Activated CD4-positive, alpha-beta T cell treated with anti-CD3 and anti-CD28 coated beads, Interleukin-2, amount 10 ng/mL, durations not matched to agents 7 days and 5 days (primary cell): ENCODE measurements at regions of chr5 and their contacts with region 1.

Region 1: DNA sequence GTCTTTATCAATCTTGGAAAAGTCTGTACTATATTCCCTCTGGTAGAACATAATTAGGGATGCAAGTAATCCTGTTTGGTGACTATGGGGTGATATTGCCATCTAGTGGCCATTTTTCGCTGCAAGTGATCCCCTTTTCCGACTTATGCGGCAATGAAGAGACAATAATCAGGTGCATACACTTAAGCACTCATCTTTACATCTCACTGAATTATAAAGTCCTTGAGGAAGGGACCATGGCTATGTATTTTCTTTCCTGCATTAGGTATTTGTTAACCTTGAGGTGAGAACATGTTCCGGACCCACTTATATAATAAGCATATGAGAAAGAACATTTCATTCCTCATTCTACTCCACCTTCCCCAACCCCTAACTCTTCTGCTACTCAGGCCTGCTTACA is 19.6 kb upstream of the LIX1 start:
- DNase-seq: peak; percentile 71
- H3K4me3 Mint-ChIP-seq: no peak overlapping the region
- H3K27ac Mint-ChIP-seq: no peak overlapping the region
- H3K4me1 Mint-ChIP-seq: peaks cover 15% of the 10 kb centered on the region
- H3K27me3 Mint-ChIP-seq: peaks cover under 1% of the 10 kb centered on the region

Region 2: GRCh38 chr5:96984506-96985192 is 177.4 kb before region 1 on chr5:
- CTCF ChIA-PET with region 1: no interaction called
- POLR2A ChIA-PET with region 1: no interaction called
- DNase-seq: no peak
- H3K4me3 Mint-ChIP-seq: no peak overlapping the region
- H3K27ac Mint-ChIP-seq: peak overlapping the region; percentile 16
- H3K4me1 Mint-ChIP-seq: peaks cover 25% of the 10 kb centered on the region
- H3K27me3 Mint-ChIP-seq: no peaks in the 10 kb centered on the region

Region 3: DNA sequence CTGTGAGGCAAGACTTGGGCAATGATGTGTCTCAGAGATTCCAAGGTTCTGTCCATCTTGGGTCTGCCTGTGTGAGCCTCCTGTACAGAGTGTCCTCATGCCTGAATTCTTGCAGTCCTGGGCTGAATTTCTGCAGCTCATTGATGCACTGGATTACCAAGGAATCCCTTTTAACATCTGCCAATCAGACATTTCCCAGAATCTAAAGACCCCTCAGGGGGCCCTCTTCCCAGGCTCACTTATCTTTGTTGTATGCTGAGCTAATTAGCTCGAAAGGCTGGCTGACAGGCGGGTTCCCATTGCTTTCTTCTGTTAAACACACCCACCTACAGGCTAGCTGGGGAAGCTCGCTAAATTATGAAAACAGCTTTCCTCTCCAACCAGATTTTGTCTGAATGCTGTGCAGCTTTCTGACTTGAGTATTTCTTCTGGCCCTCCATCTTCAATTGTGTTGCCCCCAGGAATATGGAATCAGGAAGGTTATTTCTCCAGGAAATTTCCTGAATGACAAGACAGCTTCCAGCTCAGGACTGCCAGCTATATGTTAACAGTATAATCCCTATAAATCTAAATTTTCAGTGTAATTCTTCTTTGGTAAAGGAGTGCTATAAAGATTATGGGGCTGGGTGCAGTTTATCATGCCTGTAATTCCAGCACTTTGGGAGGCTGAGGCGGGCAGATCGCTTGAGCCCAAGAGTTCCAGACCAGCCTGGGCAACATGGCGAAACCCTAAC is 19.4 kb before region 1 on chr5 and contains the start of gene LIX1:
- CTCF ChIA-PET with region 1: interaction called, 15 read pairs
- POLR2A ChIA-PET with region 1: no interaction called
- DNase-seq: peak; percentile 57
- H3K4me3 Mint-ChIP-seq: no peak within 1 kb of the TSS
- H3K27ac Mint-ChIP-seq: no peak within 1 kb of the TSS
- H3K4me1 Mint-ChIP-seq: peaks cover 2% of the 10 kb centered on the region
- H3K27me3 Mint-ChIP-seq: peaks cover 20% of the 10 kb centered on the region
- total RNA-seq, gene LIX1: not detected

Region 4: DNA sequence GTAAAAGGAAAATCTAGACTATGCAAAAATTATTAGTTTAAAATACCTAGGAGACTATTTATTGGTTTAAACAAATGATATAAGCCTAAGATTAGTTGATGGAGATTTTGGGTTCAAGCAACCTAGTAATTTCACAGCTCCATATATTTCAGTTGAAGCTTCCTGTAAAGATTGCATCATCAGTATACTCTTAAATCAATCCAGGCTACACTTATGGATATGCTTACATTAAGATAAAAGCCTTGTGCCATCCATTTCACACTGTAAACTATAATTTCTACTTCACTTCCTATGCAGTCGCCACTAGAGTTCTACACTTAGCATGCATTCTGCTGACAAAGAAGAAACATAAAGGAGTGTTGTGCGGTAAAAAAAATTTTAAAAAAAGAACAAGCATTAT is 12.3 kb before region 1 on chr5:
- CTCF ChIA-PET with region 1: interaction called, 15 read pairs
- POLR2A ChIA-PET with region 1: no interaction called
- DNase-seq: no peak
- H3K4me3 Mint-ChIP-seq: no peak overlapping the region
- H3K27ac Mint-ChIP-seq: no peak overlapping the region
- H3K4me1 Mint-ChIP-seq: no peaks in the 10 kb centered on the region
- H3K27me3 Mint-ChIP-seq: peaks cover 3% of the 10 kb centered on the region

Region 5: DNA sequence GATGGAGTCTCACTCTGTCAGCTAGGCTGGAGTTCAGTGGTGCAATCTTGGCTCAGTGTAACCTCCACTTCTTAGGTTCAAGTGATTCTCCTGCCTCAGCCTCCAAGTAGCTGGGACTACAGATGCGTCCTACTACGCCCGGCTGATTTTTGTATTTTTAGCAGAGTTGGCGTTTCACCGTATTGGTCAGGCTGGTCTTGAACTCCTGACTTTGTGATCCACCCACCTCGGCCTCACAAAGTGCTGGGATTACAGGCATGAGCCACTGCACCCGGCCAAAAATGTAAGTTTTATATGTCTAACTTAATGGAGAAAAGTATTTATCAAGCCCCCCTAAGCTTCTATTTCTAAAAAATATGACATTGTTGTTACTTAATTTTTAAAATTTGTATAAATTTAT is 119.2 kb after region 1 on chr5:
- CTCF ChIA-PET with region 1: no interaction called
- POLR2A ChIA-PET with region 1: no interaction called
- DNase-seq: no peak
- H3K4me3 Mint-ChIP-seq: no peak overlapping the region
- H3K27ac Mint-ChIP-seq: no peak overlapping the region
- H3K4me1 Mint-ChIP-seq: no peaks in the 10 kb centered on the region
- H3K27me3 Mint-ChIP-seq: no peaks in the 10 kb centered on the region